ENCODE measurements at regions of chr2 and their contacts with region 1.

Region 1: GRCh38 chr2:54977149-54977548 is 73.1 kb downstream of the RTN4 start:
- DNase-seq: no peak
- H3K4me3 ChIP-seq: no peak overlapping the region
- H3K27ac ChIP-seq: no peak overlapping the region
- H3K4me1 ChIP-seq: peaks cover 26% of the 10 kb centered on the region
- H3K27me3 ChIP-seq: no peaks in the 10 kb centered on the region
- CTCF ChIP-seq: no peak

Region 2: GRCh38 chr2:54803783-54804751 is 173.1 kb before region 1 on chr2:
- CTCF ChIA-PET with region 1: no interaction called
- POLR2A ChIA-PET with region 1: interaction called, 10 read pairs
- intact Hi-C with region 1: no loop called
- DNase-seq: no peak
- H3K4me3 ChIP-seq: no peak overlapping the region
- H3K27ac ChIP-seq: no peak overlapping the region
- H3K4me1 ChIP-seq: no peaks in the 10 kb centered on the region
- H3K27me3 ChIP-seq: no peaks in the 10 kb centered on the region
- CTCF ChIP-seq: no peak

Region 3: GRCh38 chr2:54966165-54966832 is 10.8 kb before region 1 on chr2:
- CTCF ChIA-PET with region 1: no interaction called
- POLR2A ChIA-PET with region 1: no interaction called
- intact Hi-C with region 1: no loop called
- DNase-seq: peak in 1 of 2 experiments; percentile 56
- H3K4me3 ChIP-seq: no peak overlapping the region
- H3K27ac ChIP-seq: peak overlapping the region; percentile 22
- H3K4me1 ChIP-seq: no peaks in the 10 kb centered on the region
- H3K27me3 ChIP-seq: no peaks in the 10 kb centered on the region
- CTCF ChIP-seq: no peak

Region 4: DNA sequence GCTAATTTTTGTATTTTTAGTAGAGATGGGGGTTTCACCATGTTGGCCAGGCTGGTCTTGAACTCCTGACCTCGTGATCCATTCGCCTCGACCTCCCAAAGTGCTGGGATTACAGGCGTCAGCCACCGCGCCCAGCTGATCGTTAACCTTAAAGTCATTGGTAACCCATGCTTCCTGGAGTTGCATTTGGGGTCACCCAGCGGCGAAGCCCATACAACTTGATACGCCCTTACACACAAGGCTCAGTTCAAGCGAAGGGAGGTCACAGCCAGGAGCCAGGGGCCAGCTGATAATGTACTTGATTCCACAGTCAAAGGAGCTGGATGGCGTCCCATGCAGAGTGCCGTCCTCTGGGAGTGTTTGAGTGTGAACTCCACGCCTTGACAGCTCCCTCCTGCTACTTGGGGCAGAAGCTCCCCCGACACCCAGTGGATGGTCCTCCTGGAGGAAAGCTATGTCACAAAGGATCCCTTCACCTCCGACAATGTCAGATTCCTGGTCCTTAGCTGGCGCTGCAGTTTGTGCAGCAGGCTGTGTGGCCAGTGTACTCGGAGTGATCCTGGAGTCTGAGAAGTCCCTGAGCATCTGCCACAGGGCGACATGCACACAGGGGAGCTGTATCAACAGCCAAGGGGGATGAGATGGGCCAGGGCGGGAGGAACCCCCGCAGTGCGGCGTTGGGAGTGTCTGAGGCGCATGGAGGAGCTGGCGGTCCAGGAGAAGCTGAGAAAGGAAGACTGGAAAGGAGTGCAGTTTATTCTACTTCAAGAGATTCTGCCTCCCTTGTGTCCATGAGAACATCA is 247.0 kb after region 1 on chr2:
- CTCF ChIA-PET with region 1: no interaction called
- POLR2A ChIA-PET with region 1: no interaction called
- intact Hi-C with region 1: no loop called
- DNase-seq: no peak
- H3K4me3 ChIP-seq: peak overlapping the region; percentile 53; the same call in 1 of the 2 replicates
- H3K27ac ChIP-seq: no peak overlapping the region
- H3K4me1 ChIP-seq: 0 out of 2 replicates have a peak, but pooled peaks cover 5% of the 10 kb centered on the region
- H3K27me3 ChIP-seq: no peaks in the 10 kb centered on the region
- CTCF ChIP-seq: no peak

Measured in PC-9 (cell line).